Caco-2 (cell line): ENCODE measurements at regions of chr21 and their contacts with region 1.

Region 1: GRCh38 chr21:33608559-33608958 is 20.1 kb upstream of the DONSON start:
- DNase-seq: no peak
- H3K4me3 ChIP-seq: no peak overlapping the region
- H3K4me3 Mint-ChIP-seq: no peak overlapping the region
- H3K27ac Mint-ChIP-seq: no peak overlapping the region
- H3K4me1 ChIP-seq: no peaks in the 10 kb centered on the region
- H3K4me1 Mint-ChIP-seq: no peaks in the 10 kb centered on the region
- H3K27me3 ChIP-seq: no peaks in the 10 kb centered on the region
- H3K27me3 Mint-ChIP-seq: no peaks in the 10 kb centered on the region
- CTCF ChIP-seq: no peak

Region 2: DNA sequence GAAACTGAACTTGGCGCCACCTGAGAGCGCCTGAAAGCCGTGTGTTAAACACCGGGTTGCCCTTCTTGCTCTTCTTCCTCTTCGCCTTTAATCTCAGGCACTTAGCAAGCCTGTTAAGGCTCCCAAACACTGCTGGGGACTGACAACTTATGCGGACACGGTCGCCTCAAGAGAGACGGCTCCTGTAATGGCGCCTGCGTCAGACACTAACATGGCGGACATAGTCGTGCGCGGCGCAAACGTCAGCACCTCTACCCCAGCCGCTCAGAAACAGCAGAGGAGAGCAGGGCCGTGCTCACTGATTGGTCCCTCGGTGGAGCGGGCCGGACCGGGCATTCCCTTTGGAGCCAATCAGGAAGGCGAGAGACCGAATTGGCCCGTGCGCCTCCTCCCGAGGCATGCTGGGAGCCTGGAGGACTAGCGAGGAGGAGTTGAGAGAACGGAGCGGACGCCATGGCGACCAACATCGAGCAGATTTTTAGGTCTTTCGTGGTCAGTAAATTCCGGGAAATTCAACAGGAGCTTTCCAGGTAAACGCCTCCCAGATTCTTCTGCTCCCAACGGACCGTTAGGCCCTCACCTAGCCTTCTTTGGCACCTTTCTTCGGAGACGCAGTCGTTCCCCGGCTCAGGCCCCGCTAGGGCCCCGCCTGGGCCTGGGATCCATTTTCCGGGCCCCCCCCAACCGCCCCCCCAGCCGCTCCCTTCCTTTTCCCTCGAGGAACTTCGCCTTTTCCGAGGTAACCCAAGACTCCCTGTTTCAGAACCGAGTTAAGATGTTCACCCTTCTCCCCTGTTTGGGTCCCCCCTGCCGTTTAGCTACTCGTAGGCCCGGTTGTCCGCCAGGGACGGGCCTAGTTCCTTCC is 65.7 kb before region 1 on chr21 and contains the start of gene SON:
- CTCF ChIA-PET with region 1: interaction called, 4 read pairs
- POLR2A ChIA-PET with region 1: interaction called, 7 read pairs
- intact Hi-C with region 1: loop called (anchors 5 kb)
- DNase-seq: peak; percentile 98 to 99
- H3K4me3 ChIP-seq: peak within 1 kb of the TSS; percentile 74
- H3K4me3 Mint-ChIP-seq: peak within 1 kb of the TSS; percentile 82
- H3K27ac Mint-ChIP-seq: peak within 1 kb of the TSS; percentile 98
- H3K4me1 ChIP-seq: peaks cover 19% of the 10 kb centered on the region
- H3K4me1 Mint-ChIP-seq: peaks cover 9% of the 10 kb centered on the region
- H3K27me3 ChIP-seq: no peaks in the 10 kb centered on the region
- H3K27me3 Mint-ChIP-seq: no peaks in the 10 kb centered on the region
- CTCF ChIP-seq: no peak
- total RNA-seq, gene SON: 220 and 273 TPM in 2 replicates

Region 3: DNA sequence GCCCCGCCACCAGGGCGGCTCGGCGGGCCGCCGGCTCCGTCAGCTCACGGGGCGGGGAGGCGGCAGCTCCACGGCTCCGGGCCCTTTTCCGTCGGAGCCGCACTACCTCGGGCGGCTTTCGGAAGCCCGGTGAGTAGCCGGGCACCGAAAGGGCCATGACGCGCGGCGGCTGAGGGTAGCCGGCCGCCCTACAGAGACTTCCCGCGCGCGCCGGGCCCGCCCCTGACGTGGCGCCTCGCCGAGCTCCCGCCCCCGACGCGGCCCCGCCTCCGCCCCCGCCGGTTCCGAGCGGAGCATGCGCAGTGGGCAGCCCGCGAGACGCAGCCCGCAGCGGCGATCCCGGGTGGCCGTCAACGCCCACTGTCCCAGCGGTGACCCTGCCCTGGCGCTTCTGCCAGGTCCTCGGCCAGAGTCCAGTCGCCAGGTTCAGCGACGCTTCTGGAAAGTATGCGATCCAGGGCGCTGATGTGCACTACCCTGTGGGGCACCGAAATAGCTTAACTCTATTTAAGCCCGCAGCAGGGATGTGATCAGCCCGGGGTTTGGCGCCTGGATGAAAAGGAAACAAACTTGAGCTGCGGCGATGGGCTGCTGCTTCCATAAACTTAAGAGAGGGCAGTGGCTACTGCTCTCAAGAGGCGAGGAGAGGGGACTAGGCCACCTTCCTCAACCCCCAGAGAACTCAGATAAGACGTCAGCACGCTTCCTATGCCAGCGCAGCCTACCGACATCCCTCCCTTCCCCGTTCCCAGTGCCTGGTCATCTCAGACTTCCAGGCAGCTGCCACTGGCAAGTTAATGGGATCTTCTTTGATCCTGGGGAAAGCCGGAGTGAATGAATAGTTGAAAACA is 19.8 kb before region 1 on chr21 and contains the start of gene DONSON:
- CTCF ChIA-PET with region 1: interaction called, 35 read pairs
- POLR2A ChIA-PET with region 1: no interaction called
- intact Hi-C with region 1: loop called (anchors 1 kb)
- DNase-seq: peak; percentile 94 to 96
- H3K4me3 ChIP-seq: peak within 1 kb of the TSS; percentile 85
- H3K4me3 Mint-ChIP-seq: peak within 1 kb of the TSS; percentile 91
- H3K27ac Mint-ChIP-seq: peak within 1 kb of the TSS; percentile 88
- H3K4me1 ChIP-seq: peaks cover 15% of the 10 kb centered on the region
- H3K4me1 Mint-ChIP-seq: peaks cover 8% of the 10 kb centered on the region
- H3K27me3 ChIP-seq: no peaks in the 10 kb centered on the region
- H3K27me3 Mint-ChIP-seq: no peaks in the 10 kb centered on the region
- CTCF ChIP-seq: no peak
- total RNA-seq, gene DONSON: 36.2 and 36.4 TPM in 2 replicates

Region 4: DNA sequence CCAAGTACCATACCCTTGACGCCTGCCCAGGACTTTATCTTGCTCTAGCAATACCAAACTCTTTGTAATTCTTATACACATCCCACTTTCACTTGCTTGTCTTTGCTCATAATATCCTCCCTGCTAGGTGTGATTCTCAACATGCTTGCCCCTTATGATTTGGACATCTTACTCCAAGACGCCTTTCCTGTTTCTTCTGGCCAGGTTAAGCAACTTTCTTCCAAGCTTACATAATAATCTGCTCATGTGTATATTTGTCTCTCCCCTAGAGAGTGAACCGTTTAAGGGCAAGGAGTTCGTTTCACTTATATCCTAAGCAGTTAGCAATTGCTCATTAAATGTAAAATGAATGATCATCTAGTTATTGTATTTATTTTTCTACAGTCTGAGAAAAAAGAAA is 11.2 kb after region 1 on chr21:
- CTCF ChIA-PET with region 1: interaction called, 14 read pairs
- POLR2A ChIA-PET with region 1: no interaction called
- intact Hi-C with region 1: no loop called
- DNase-seq: no peak
- H3K4me3 ChIP-seq: no peak overlapping the region
- H3K4me3 Mint-ChIP-seq: no peak overlapping the region
- H3K27ac Mint-ChIP-seq: no peak overlapping the region
- H3K4me1 ChIP-seq: peaks cover 36% of the 10 kb centered on the region
- H3K4me1 Mint-ChIP-seq: peaks cover 17% of the 10 kb centered on the region
- H3K27me3 ChIP-seq: no peaks in the 10 kb centered on the region
- H3K27me3 Mint-ChIP-seq: no peaks in the 10 kb centered on the region
- CTCF ChIP-seq: no peak

Region 5: GRCh38 chr21:33894736-33895288 is 286.3 kb after region 1 on chr21:
- CTCF ChIA-PET with region 1: interaction called, 6 read pairs
- POLR2A ChIA-PET with region 1: no interaction called
- intact Hi-C with region 1: loop called (anchors 2 kb)
- DNase-seq: peak; percentile 83 to 87
- H3K4me3 ChIP-seq: no peak overlapping the region
- H3K4me3 Mint-ChIP-seq: peak overlapping the region; percentile 58
- H3K27ac Mint-ChIP-seq: peak overlapping the region; percentile 58
- H3K4me1 ChIP-seq: no peaks in the 10 kb centered on the region
- H3K4me1 Mint-ChIP-seq: peaks cover 11% of the 10 kb centered on the region
- H3K27me3 ChIP-seq: no peaks in the 10 kb centered on the region
- H3K27me3 Mint-ChIP-seq: no peaks in the 10 kb centered on the region
- CTCF ChIP-seq: peak; percentile 54 to 84